ENCODE measurements at regions of chr10 and their contacts with region 1.

Region 1: DNA sequence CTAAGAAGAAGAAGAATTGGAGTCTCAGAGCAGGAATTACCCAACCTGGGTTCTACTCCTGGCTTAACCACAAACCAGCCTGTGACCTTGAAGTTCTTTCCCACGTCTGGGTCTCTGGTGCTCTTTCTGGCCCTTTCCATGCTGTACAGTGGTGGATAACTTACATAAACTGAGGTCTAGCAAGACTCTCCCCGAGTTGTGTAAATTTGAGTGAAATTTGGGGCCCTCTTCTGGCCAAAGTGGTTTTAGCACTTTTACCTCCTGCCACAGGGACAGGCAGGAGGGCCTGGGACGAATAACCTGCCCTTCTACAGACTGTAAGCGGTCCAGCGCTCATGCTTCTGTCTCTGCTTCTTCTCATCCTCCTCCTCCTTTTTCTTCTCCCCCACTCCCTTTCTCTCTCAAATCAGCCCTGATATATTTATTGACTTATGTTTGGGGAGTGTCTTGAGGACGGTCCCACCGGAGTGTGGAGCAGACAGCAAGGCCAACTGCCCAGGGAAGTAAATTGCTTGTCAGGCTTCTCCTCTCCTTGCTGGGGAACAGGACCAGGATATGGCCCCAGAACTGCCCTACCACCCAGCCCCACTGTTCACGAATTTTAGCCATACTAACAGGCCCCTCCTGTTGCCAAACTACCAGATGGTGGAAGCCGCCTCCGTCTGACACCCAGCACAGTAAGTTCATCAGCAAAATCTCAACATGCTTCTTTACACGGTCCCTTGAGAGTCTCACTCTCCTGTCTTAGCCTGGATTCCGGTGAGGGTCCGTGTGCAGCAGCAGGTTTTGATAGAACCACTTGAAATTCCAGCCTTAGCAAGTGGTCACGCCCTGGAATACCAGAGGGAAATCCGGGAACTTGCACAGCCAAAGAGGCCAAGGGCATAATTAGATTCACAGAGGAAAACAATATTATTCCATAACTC is 4.0 kb upstream of the SH3PXD2A start:
- DNase-seq: peak; percentile 71
- H3K4me3 ChIP-seq: no peak overlapping the region
- H3K27ac ChIP-seq: no peak overlapping the region; a peak in 1 of 4 replicates
- H3K4me1 ChIP-seq: peaks cover 0 to 19% of the 10 kb centered on the region in 2 experiments; a peak in 2 of 4 replicates
- H3K27me3 ChIP-seq: no peaks in the 10 kb centered on the region
- CTCF ChIP-seq: peak; percentile 78
- EP300 ChIP-seq: no peak
- RAD21 ChIP-seq: peak; percentile 87

Region 2: DNA sequence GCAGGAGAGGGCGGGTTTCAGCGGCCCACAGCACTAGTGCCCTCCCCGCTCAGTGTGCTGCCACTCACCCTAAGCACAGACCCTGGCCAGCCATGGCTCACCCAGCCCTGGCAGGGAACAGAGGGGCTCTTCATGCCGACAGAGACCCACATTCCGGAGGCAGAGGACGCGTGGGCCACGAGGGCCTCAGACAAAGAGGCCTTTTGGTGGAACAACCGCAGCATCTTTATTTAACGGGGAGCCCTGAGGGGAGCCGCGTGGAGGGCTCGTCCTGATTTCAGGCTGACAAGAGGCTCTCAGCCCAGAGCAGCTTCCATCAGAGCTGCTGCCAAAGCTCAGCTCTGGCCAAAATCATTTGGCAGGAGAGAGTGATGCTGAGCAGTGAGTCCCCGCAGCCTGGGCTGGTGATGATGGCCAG is 131.9 kb before region 1 on chr10:
- CTCF ChIA-PET with region 1: interaction called, 87 read pairs
- POLR2A ChIA-PET with region 1: interaction called, 6 read pairs
- DNase-seq: peak; percentile 67
- H3K4me3 ChIP-seq: no peak overlapping the region
- H3K27ac ChIP-seq: peak overlapping the region in 1 of 2 experiments; percentile 94; a peak in 2 of 4 replicates
- H3K4me1 ChIP-seq: peaks cover 2 to 62% of the 10 kb centered on the region in 2 experiments; a peak in 3 of 4 replicates
- H3K27me3 ChIP-seq: no peaks in the 10 kb centered on the region
- CTCF ChIP-seq: no peak
- EP300 ChIP-seq: peak in 1 of 2 experiments; percentile 49; a peak in 2 of 4 replicates
- RAD21 ChIP-seq: no peak

Region 3: GRCh38 chr10:103752680-103753248 is 106.7 kb before region 1 on chr10:
- CTCF ChIA-PET with region 1: interaction called, 22 read pairs
- POLR2A ChIA-PET with region 1: interaction called, 3 read pairs
- DNase-seq: no peak
- H3K4me3 ChIP-seq: peak overlapping the region in 1 of 2 experiments; percentile 41; a peak in 1 of 4 replicates
- H3K27ac ChIP-seq: no peak overlapping the region
- H3K4me1 ChIP-seq: peaks cover 3 to 6% of the 10 kb centered on the region in 2 experiments; a peak in 2 of 4 replicates
- H3K27me3 ChIP-seq: no peaks in the 10 kb centered on the region
- CTCF ChIP-seq: peak; percentile 83
- EP300 ChIP-seq: no peak
- RAD21 ChIP-seq: no peak

Region 4: GRCh38 chr10:103839872-103840746 is 19.3 kb before region 1 on chr10:
- CTCF ChIA-PET with region 1: interaction called, 11 read pairs
- POLR2A ChIA-PET with region 1: no interaction called
- DNase-seq: no peak
- H3K4me3 ChIP-seq: no peak overlapping the region
- H3K27ac ChIP-seq: peak overlapping the region in 1 of 2 experiments; percentile 72; a peak in 2 of 4 replicates
- H3K4me1 ChIP-seq: peaks cover 36 to 63% of the 10 kb centered on the region in 2 experiments
- H3K27me3 ChIP-seq: no peaks in the 10 kb centered on the region
- CTCF ChIP-seq: no peak
- EP300 ChIP-seq: no peak
- RAD21 ChIP-seq: no peak

Region 5: GRCh38 chr10:103874730-103875129 is 15.3 kb after region 1 on chr10:
- CTCF ChIA-PET with region 1: interaction called, 18 read pairs
- POLR2A ChIA-PET with region 1: interaction called, 3 read pairs
- DNase-seq: peak; percentile 77
- H3K4me3 ChIP-seq: no peak overlapping the region
- H3K27ac ChIP-seq: peak overlapping the region in 1 of 2 experiments; percentile 88; a peak in 2 of 4 replicates
- H3K4me1 ChIP-seq: peaks cover 0 to 19% of the 10 kb centered on the region in 2 experiments; a peak in 2 of 4 replicates
- H3K27me3 ChIP-seq: no peaks in the 10 kb centered on the region
- CTCF ChIP-seq: no peak
- EP300 ChIP-seq: peak in 1 of 2 experiments; percentile 65; a peak in 1 of 4 replicates
- RAD21 ChIP-seq: peak; percentile 36

Region 6: DNA sequence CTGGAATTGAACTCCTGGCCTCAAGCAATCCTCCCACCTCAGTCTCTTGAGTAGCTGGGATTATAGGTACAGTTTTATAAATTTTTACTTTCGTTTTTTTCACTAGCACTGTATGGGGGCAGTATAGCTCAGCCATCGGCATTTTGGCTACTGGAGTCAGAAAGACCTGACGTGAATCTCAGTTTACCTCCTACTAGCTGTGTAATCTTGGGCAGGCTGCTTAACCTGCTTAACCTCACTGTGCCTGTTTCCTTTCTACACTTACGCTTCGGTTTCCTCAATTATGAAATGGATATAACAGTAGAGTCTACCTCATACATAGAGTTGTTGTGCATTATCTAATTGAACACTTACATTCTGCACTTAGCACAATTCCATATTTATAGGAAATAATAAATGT is 41.9 kb after region 1 on chr10:
- CTCF ChIA-PET with region 1: no interaction called
- POLR2A ChIA-PET with region 1: no interaction called
- DNase-seq: no peak
- H3K4me3 ChIP-seq: no peak overlapping the region
- H3K27ac ChIP-seq: no peak overlapping the region
- H3K4me1 ChIP-seq: peaks cover 1 to 7% of the 10 kb centered on the region in 2 experiments; a peak in 3 of 4 replicates
- H3K27me3 ChIP-seq: no peaks in the 10 kb centered on the region
- CTCF ChIP-seq: no peak
- EP300 ChIP-seq: no peak
- RAD21 ChIP-seq: no peak

Region 7: DNA sequence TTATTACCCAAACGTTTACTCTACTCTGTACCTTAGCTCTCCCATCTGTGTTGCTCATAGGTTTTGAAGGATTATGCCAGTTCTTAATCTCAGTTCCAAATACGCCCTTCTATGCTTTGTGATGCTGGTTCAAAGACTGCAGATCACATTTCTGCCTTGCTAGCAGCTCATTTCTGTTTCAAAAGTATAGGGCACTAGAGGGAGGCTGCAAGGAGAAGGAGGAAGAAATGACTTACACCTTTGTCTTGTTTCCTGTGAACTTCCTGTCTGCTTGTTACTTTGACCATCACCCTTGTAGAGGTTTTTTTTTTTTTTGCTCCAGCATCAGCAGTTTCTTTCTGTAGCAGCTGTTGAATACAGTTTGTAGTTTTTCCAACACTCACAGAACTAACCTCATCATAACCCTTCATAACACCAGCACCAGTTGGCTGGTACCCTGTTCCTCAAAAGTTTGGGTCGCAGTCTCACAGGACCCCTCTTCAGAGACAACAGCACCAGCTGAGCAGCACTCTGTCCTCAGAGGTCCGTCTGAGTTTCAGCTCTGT is 124.0 kb after region 1 on chr10:
- CTCF ChIA-PET with region 1: no interaction called
- POLR2A ChIA-PET with region 1: no interaction called
- DNase-seq: no peak
- H3K4me3 ChIP-seq: no peak overlapping the region
- H3K27ac ChIP-seq: peak overlapping the region in 1 of 2 experiments; percentile 7; a peak in 1 of 4 replicates
- H3K4me1 ChIP-seq: peaks cover 0 to 22% of the 10 kb centered on the region in 2 experiments; a peak in 3 of 4 replicates
- H3K27me3 ChIP-seq: no peaks in the 10 kb centered on the region
- CTCF ChIP-seq: no peak
- EP300 ChIP-seq: no peak
- RAD21 ChIP-seq: no peak

Measured in SK-N-SH (cell line).